ENCODE measurements at regions of chr2 and their contacts with region 1.

Region 1: GRCh38 chr2:54763636-54764291 is 40.3 kb downstream of the EML6 start:
- DNase-seq: no peak
- H3K4me3 ChIP-seq: no peak overlapping the region
- H3K27ac ChIP-seq: no peak overlapping the region
- H3K4me1 ChIP-seq: peaks cover 15% of the 10 kb centered on the region
- H3K27me3 ChIP-seq: no peaks in the 10 kb centered on the region
- CTCF ChIP-seq: peak; percentile 38 to 63

Region 2: DNA sequence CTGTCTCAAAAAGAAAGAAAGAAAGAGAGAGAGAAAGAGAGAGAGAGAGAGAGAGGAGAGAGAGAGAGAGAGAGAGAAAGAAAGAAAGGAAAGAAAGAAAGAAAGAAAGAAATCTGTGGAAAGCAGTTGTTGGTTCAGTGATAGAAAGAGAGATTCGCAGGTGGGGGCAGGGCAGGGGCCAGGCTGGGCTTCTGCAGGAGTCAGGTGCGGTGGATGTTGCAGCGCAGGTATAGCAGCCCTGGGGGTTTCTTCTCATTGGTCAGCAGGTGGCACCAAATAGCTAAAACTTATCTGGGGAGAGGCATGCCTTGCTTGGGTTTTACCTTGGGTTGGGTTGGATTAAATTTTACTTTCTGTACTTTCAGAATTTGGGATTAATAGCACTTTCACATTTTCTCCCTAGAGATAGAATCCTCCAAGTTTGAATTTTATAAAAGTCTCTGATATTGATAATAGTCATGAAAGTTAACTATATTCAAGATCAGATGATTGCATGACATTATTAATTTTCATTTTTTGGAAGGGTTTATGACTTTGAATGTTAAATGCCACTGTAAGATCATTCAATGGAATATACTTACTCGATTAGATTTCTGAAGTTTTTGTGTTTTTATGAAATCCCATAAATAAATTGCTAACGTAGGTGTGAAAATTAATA is 241.0 kb before region 1 on chr2:
- CTCF ChIA-PET with region 1: no interaction called
- dilution Hi-C with region 1: no loop called
- in situ Hi-C with region 1: no loop called
- intact Hi-C with region 1: no loop called
- DNase-seq: peak; percentile 72
- H3K4me3 ChIP-seq: no peak overlapping the region
- H3K27ac ChIP-seq: peak overlapping the region; percentile 49
- H3K4me1 ChIP-seq: peaks cover 46% of the 10 kb centered on the region
- H3K27me3 ChIP-seq: no peaks in the 10 kb centered on the region
- CTCF ChIP-seq: peak; percentile 73 to 78

Region 3: GRCh38 chr2:54665436-54665856 is 98.3 kb before region 1 on chr2:
- CTCF ChIA-PET with region 1: no interaction called
- dilution Hi-C with region 1: no loop called
- in situ Hi-C with region 1: no loop called
- intact Hi-C with region 1: no loop called
- DNase-seq: no peak
- H3K4me3 ChIP-seq: no peak overlapping the region
- H3K27ac ChIP-seq: no peak overlapping the region
- H3K4me1 ChIP-seq: peaks cover 24% of the 10 kb centered on the region
- H3K27me3 ChIP-seq: no peaks in the 10 kb centered on the region
- CTCF ChIP-seq: peak; percentile 57 to 62

Region 4: GRCh38 chr2:55014962-55015939 is 251.5 kb after region 1 on chr2:
- CTCF ChIA-PET with region 1: interaction called, 14 read pairs
- dilution Hi-C with region 1: no loop called
- in situ Hi-C with region 1: no loop called
- intact Hi-C with region 1: no loop called
- DNase-seq: peak; percentile 57
- H3K4me3 ChIP-seq: peak overlapping the region in 1 of 3 experiments; percentile 7
- H3K27ac ChIP-seq: peak overlapping the region; percentile 22
- H3K4me1 ChIP-seq: peaks cover 63% of the 10 kb centered on the region
- H3K27me3 ChIP-seq: no peaks in the 10 kb centered on the region
- CTCF ChIP-seq: peak; percentile 66 to 76

Measured in mammary epithelial cell (primary cell).